Common myeloid progenitor, CD34-positive (primary cell): ENCODE measurements at regions of chr10 and their contacts with region 1.

Region 1: GRCh38 chr10:103727546-103727963 is 127.8 kb downstream of the SH3PXD2A start:
- DNase-seq: no peak
- H3K4me3 ChIP-seq: no peak overlapping the region
- H3K27ac ChIP-seq: no peak overlapping the region
- H3K4me1 ChIP-seq: no peaks in the 10 kb centered on the region
- H3K27me3 ChIP-seq: no peaks in the 10 kb centered on the region

Region 2: DNA sequence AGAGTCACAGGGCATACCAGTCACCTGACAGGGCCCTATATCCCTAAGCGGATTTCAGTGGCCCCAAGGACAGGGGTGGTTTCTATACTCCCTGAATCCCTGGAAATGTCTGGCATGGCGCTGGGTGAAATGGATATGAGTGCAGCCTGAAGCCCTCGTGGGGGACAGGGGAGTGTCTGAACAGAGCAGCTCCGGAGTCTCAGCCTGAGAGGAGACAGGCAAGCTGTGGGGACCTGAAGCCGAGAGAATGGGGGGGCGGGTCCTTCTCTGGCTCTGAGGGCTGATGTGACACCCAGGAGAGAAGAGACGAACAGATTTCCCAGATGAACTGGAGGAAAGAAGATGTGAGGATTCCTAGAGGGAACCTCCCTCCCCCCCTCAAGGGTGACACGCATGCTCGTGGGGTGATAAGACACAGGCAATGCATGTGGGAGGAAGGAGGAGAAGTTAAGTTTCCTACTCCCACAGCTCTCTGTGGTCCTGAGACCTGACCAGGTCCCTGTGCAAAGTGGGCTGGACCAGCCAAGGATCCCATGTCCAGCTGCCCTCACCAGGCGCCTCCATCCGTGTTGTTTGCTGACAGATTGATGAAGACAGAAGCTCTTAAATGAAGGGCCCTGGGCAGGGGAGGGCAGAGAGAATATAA is 15.1 kb after region 1 on chr10:
- CTCF ChIA-PET with region 1: interaction called, 12 read pairs
- POLR2A ChIA-PET with region 1: interaction called, 3 read pairs
- DNase-seq: no peak
- H3K4me3 ChIP-seq: no peak overlapping the region
- H3K27ac ChIP-seq: no peak overlapping the region
- H3K4me1 ChIP-seq: peaks cover 0 to 35% (median 2%) of the 10 kb centered on the region in 4 experiments
- H3K27me3 ChIP-seq: no peaks in the 10 kb centered on the region